Dendritic cell treated with granulocyte-macrophage colony-stimulating factor and Interleukin-4, amounts not matched to agents 40 ng/mL and 50 ng/mL, for 4 days (primary cell): ENCODE measurements at regions of chr14 and their contacts with region 1.

Region 1: GRCh38 chr14:61252369-61253063 is 28.6 kb downstream of the TMEM30B start:
- H3K4me3 Mint-ChIP-seq: no peak overlapping the region
- H3K27ac Mint-ChIP-seq: no peak overlapping the region
- H3K4me1 Mint-ChIP-seq: peaks cover 15% of the 10 kb centered on the region
- H3K27me3 Mint-ChIP-seq: peaks cover 15% of the 10 kb centered on the region

Region 2: GRCh38 chr14:60349663-60350365 is 902.7 kb before region 1 on chr14:
- intact Hi-C with region 1: loop called (anchors 1 kb)
- H3K4me3 Mint-ChIP-seq: no peak overlapping the region
- H3K27ac Mint-ChIP-seq: no peak overlapping the region
- H3K4me1 Mint-ChIP-seq: no peaks in the 10 kb centered on the region
- H3K27me3 Mint-ChIP-seq: peaks cover 5% of the 10 kb centered on the region

Region 3: DNA sequence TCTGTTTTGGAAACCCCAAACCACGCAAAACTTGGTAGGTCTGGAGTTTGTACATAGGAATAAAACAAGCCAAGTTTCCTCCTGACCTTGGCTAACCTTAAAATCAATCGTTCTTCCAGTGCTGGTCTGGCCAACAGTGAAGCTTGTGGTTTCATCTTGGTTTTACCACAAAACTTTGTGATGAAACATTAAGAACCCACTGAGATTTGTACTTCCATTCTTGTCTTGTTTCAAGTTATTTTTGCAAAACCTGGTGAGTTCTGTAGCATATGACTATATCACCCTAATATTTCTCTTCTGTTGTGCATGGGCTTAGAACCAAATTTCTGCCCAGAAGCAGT is 629.6 kb before region 1 on chr14:
- intact Hi-C with region 1: loop called (anchors 1 kb)
- H3K4me3 Mint-ChIP-seq: no peak overlapping the region
- H3K27ac Mint-ChIP-seq: no peak overlapping the region
- H3K4me1 Mint-ChIP-seq: peaks cover 5% of the 10 kb centered on the region
- H3K27me3 Mint-ChIP-seq: peaks cover 50% of the 10 kb centered on the region

Region 4: GRCh38 chr14:61178226-61179060 is 74.1 kb before region 1 on chr14:
- intact Hi-C with region 1: no loop called
- H3K4me3 Mint-ChIP-seq: no peak overlapping the region
- H3K27ac Mint-ChIP-seq: no peak overlapping the region
- H3K4me1 Mint-ChIP-seq: peaks cover 15% of the 10 kb centered on the region
- H3K27me3 Mint-ChIP-seq: peaks cover 32% of the 10 kb centered on the region